ENCODE measurements at regions of chr16 and their contacts with region 1.

Region 1: DNA sequence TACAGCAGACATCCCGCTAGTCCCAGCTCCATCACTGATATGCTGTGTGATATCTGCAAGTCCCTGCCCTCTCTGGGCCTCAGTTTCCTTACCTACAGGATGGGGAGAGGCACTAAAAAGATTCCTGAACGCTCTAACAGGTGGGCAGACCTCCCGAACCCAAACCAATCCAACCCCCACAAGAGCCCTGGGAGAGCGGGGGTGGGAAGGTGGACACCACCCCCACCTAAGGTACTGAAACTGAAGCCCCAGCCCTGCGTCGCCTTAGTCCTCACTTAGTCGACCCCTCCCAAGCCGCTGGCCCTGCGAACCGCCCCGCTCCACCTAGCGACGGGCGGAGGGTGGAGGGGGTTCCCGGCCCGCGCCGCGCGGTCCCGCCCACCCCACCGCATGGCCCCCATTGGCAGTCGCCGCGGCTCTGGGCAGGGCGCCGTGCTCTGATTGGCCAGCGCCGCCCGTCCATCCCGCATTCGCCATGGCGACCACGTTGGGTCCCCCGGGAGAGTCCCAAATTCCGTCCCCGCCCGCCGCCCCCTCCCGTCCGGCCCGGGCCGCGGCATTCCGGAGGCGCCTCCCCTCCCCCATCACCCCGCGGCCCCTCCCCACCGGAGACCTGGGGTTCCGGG is 578 bp downstream of the CCDC102A start:
- DNase-seq: peak; percentile 83 to 97 (median 92)
- ATAC-seq: peak; percentile 82
- H3K4me3 ChIP-seq: peak overlapping the region; percentile 69 to 80
- H3K4me3 Mint-ChIP-seq: peak overlapping the region; percentile 81
- H3K27ac ChIP-seq: peak overlapping the region; percentile 64 to 96
- H3K27ac Mint-ChIP-seq: peak overlapping the region; percentile 96
- H3K4me1 ChIP-seq: peaks cover 81% of the 10 kb centered on the region
- H3K4me1 Mint-ChIP-seq: peaks cover 70% of the 10 kb centered on the region
- H3K27me3 ChIP-seq: no peaks in the 10 kb centered on the region
- H3K27me3 Mint-ChIP-seq: no peaks in the 10 kb centered on the region
- CTCF ChIP-seq: no peak

Region 2: DNA sequence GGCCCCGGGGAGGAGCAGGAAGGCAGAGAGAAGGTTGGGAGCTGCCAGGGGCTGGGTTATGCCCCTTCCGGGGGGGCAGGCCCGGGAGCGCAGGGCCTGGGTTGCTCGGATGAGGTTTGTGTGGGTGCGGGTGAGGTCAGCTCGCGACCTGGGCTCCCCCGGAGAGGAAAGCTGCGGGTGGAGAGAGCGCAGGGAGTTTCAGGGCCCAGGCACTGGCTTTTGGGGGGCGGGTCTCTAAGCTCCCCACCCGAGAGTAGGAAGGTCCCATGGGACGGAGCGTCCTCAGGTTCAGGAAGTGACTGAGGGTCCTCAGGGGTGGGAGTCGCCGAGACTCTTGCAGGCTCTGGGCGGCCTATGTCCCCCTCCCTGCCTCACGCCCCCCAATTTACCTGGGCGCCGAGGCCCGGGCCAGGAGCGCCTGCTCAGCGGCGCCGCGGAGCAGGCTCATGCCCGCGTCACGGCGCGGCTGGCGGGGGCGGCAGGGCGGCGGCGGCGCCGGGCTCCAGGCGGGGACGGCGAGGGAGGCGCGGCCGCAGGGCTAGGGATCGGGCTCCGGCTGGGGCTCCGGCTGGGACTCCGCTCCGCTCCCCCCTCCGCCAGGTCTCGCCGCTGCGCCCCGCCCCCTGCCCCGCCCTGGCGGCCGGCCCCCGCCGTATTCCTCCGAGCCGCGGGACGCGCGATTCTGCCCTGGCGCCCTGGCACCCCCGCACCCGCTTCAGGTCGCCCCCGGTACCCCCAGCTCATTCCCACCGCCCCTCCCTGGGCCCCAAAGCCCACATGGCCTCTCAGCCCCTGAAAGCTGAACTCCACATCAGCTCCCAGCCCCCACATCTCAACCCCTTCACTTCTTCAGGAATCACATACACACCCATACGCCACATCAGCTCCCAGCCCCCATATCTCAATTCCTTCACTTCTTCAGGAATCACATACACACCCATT is 49.6 kb before region 1 on chr16 and contains the start of gene DOK4:
- CTCF ChIA-PET with region 1: interaction called, 10 read pairs
- POLR2A ChIA-PET with region 1: interaction called, 16 read pairs
- intact Hi-C with region 1: loop called (anchors 1 kb)
- DNase-seq: peak; percentile 60 to 86 (median 77)
- ATAC-seq: peak; percentile 97
- H3K4me3 ChIP-seq: peak within 1 kb of the TSS; percentile 68 to 72
- H3K4me3 Mint-ChIP-seq: peak within 1 kb of the TSS; percentile 86
- H3K27ac ChIP-seq: no peak within 1 kb of the TSS
- H3K27ac Mint-ChIP-seq: peak within 1 kb of the TSS; percentile 69
- H3K4me1 ChIP-seq: peaks cover 18% of the 10 kb centered on the region
- H3K4me1 Mint-ChIP-seq: peaks cover 25% of the 10 kb centered on the region
- H3K27me3 ChIP-seq: no peaks in the 10 kb centered on the region
- H3K27me3 Mint-ChIP-seq: no peaks in the 10 kb centered on the region
- CTCF ChIP-seq: no peak
- total RNA-seq, gene DOK4: 1.7 to 1.9 TPM

Measured in CD8-positive, alpha-beta T cell (primary cell).